A673 (cell line): ENCODE measurements at regions of chr14 and their contacts with region 1.

Region 1: DNA sequence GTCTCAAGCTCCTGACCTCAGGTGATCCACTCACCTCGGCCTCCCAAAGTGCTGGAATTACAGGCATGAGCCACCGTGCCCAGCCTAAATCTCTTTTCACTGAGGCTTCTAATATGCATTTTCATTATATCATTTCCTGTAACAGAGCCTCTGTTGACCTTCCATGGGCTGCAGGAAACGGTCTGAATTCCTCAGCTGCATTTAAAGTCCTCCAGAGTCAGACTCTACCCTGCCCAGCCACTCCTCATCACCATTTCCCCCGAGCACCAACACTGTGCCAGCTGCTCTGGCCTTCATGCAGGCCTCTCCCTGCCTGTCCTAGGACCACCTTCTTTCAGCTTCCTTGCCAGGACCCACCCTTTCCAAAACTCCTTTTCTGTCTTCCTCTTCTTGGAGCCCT is 9.8 kb upstream of the NFKBIA start:
- DNase-seq: peak; percentile 50
- H3K4me3 ChIP-seq: no peak overlapping the region
- H3K27ac ChIP-seq: no peak overlapping the region
- H3K4me1 ChIP-seq: peaks cover 7% of the 10 kb centered on the region
- H3K27me3 ChIP-seq: no peaks in the 10 kb centered on the region
- CTCF ChIP-seq: no peak

Region 2: DNA sequence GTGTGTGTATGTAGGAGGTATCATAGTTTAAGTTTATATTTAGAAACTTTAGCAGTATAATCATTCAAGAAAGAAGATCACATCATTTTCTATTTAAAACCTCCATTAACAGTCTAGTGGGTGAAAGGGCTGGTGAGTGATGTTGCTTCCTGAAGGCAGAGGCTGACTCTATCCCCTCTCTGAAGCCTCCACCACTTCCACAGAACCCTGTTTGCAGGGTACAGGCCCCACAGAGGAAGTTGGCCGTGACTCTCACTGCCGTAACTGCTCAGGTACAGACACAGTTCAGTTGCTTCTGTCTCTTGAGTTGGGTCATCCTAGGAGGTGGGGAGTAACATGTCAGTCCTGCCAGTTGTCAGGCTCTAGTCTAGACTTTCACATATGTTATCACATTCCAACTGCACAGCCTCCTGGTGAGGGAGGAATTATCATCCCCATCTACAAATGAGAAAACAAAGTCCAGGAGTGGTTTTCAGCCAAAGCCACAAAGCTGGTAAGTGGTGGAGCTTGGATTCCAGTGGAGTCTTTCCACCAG is 731.5 kb before region 1 on chr14:
- CTCF ChIA-PET with region 1: no interaction called
- POLR2A ChIA-PET with region 1: interaction called, 5 read pairs
- intact Hi-C with region 1: loop called (anchors 5 kb)
- DNase-seq: no peak
- H3K4me3 ChIP-seq: no peak overlapping the region
- H3K27ac ChIP-seq: no peak overlapping the region
- H3K4me1 ChIP-seq: peaks cover 6% of the 10 kb centered on the region
- H3K27me3 ChIP-seq: no peaks in the 10 kb centered on the region
- CTCF ChIP-seq: no peak

Region 3: GRCh38 chr14:34982417-34983147 is 431.8 kb before region 1 on chr14 and contains the start of gene SRP54:
- CTCF ChIA-PET with region 1: no interaction called
- POLR2A ChIA-PET with region 1: no interaction called
- intact Hi-C with region 1: loop called (anchors 5 kb)
- DNase-seq: peak; percentile 99
- H3K4me3 ChIP-seq: peak within 1 kb of the TSS; percentile 77
- H3K27ac ChIP-seq: peak within 1 kb of the TSS; percentile 99
- H3K4me1 ChIP-seq: peaks cover 24% of the 10 kb centered on the region
- H3K27me3 ChIP-seq: no peaks in the 10 kb centered on the region
- CTCF ChIP-seq: no peak
- total RNA-seq, gene SRP54: 60.2 and 60.3 TPM in 2 replicates

Region 4: GRCh38 chr14:35140718-35141581 is 273.4 kb before region 1 on chr14:
- CTCF ChIA-PET with region 1: interaction called, 5 read pairs
- POLR2A ChIA-PET with region 1: no interaction called
- intact Hi-C with region 1: loop called (anchors 2 kb)
- DNase-seq: peak; percentile 52
- H3K4me3 ChIP-seq: no peak overlapping the region
- H3K27ac ChIP-seq: no peak overlapping the region
- H3K4me1 ChIP-seq: no peaks in the 10 kb centered on the region
- H3K27me3 ChIP-seq: no peaks in the 10 kb centered on the region
- CTCF ChIP-seq: peak; percentile 61

Region 5: GRCh38 chr14:35146711-35147149 is 267.6 kb before region 1 on chr14:
- CTCF ChIA-PET with region 1: interaction called, 18 read pairs
- POLR2A ChIA-PET with region 1: no interaction called
- intact Hi-C with region 1: loop called (anchors 2 kb)
- DNase-seq: no peak
- H3K4me3 ChIP-seq: no peak overlapping the region
- H3K27ac ChIP-seq: no peak overlapping the region
- H3K4me1 ChIP-seq: no peaks in the 10 kb centered on the region
- H3K27me3 ChIP-seq: no peaks in the 10 kb centered on the region
- CTCF ChIP-seq: no peak

Region 6: GRCh38 chr14:35229495-35230089 is 184.8 kb before region 1 on chr14:
- CTCF ChIA-PET with region 1: interaction called, 4 read pairs
- POLR2A ChIA-PET with region 1: no interaction called
- intact Hi-C with region 1: loop called (anchors 2 kb)
- DNase-seq: peak; percentile 61
- H3K4me3 ChIP-seq: no peak overlapping the region
- H3K27ac ChIP-seq: no peak overlapping the region
- H3K4me1 ChIP-seq: peaks cover 53% of the 10 kb centered on the region
- H3K27me3 ChIP-seq: no peaks in the 10 kb centered on the region
- CTCF ChIP-seq: peak; percentile 68

Region 7: GRCh38 chr14:35797796-35798195 is 383.4 kb after region 1 on chr14:
- CTCF ChIA-PET with region 1: no interaction called
- POLR2A ChIA-PET with region 1: no interaction called
- intact Hi-C with region 1: no loop called
- DNase-seq: no peak
- H3K4me3 ChIP-seq: no peak overlapping the region
- H3K27ac ChIP-seq: no peak overlapping the region
- H3K4me1 ChIP-seq: no peaks in the 10 kb centered on the region
- H3K27me3 ChIP-seq: no peaks in the 10 kb centered on the region
- CTCF ChIP-seq: no peak